K562 (cell line): ENCODE measurements at regions of chr18 and their contacts with region 1.

Region 1: GRCh38 chr18:9130806-9131205 is 5.8 kb upstream of the ANKRD12 start:
- DNase-seq: no peak
- ATAC-seq: no peak
- H3K4me3 ChIP-seq: no peak overlapping the region
- H3K27ac ChIP-seq: no peak overlapping the region
- H3K4me1 ChIP-seq: peaks cover 0 to 4% of the 10 kb centered on the region in 2 experiments; a peak in 4 of 5 replicates
- H3K27me3 ChIP-seq: no peaks in the 10 kb centered on the region
- CTCF ChIP-seq: no peak
- EP300 ChIP-seq: no peak
- POLR2A ChIP-seq: no peak
- RAD21 ChIP-seq: no peak

Region 2: DNA sequence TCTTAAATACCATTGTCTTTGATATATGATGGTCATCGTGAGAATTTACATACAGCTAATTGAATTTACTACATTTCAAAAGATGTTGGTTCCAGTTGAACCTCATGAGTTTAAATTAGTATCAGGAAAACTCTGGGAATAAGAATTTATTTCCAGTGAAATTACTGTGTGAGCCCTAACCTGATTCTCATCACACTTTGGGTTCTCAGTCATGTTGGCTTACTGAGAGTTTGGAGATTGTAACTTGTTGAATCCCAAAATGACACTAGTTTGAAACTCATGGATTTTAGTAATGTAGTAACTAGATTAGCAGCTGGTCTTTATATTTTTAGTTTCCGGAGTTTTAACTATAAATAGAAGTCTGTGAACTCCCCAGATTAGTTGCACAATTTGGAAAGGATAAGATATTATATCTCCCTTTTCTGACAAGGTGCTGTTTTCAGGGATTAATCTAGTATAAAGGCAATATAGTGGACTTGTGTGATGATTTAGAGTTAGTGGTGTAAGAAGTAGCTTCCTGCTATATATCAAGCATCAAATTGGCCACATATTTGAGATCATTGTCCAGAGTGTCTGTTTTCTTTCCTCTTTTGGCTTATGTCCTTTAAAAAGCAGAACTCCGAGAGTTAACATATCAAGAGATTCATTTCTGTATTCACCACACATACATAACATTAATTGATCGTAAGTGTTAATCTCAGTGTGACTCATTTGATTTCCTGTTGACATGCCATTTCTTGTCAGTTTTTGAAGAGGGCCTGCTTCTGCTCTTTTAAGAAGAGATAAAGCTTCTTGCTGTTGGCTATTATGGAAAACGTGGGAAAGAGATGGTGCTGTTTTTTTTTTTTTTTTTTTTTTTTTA is 12.6 kb before region 1 on chr18:
- CTCF ChIA-PET with region 1: no interaction called
- POLR2A ChIA-PET with region 1: interaction called, 16 read pairs
- in situ Hi-C with region 1: no loop called
- intact Hi-C with region 1: no loop called
- DNase-seq: peak in 1 of 4 experiments; percentile 40
- ATAC-seq: peak; percentile 5; the same call in 1 of the 3 replicates
- H3K4me3 ChIP-seq: no peak overlapping the region
- H3K27ac ChIP-seq: peak overlapping the region; percentile 71; the same call in 2 of the 3 replicates
- H3K4me1 ChIP-seq: peaks cover 8 to 48% of the 10 kb centered on the region in 2 experiments
- H3K27me3 ChIP-seq: no peaks in the 10 kb centered on the region
- CTCF ChIP-seq: no peak
- EP300 ChIP-seq: peak; percentile 10; the same call in 1 of the 2 replicates
- POLR2A ChIP-seq: no peak
- RAD21 ChIP-seq: no peak